ENCODE measurements at regions of chr22 and their contacts with region 1.

Region 1: DNA sequence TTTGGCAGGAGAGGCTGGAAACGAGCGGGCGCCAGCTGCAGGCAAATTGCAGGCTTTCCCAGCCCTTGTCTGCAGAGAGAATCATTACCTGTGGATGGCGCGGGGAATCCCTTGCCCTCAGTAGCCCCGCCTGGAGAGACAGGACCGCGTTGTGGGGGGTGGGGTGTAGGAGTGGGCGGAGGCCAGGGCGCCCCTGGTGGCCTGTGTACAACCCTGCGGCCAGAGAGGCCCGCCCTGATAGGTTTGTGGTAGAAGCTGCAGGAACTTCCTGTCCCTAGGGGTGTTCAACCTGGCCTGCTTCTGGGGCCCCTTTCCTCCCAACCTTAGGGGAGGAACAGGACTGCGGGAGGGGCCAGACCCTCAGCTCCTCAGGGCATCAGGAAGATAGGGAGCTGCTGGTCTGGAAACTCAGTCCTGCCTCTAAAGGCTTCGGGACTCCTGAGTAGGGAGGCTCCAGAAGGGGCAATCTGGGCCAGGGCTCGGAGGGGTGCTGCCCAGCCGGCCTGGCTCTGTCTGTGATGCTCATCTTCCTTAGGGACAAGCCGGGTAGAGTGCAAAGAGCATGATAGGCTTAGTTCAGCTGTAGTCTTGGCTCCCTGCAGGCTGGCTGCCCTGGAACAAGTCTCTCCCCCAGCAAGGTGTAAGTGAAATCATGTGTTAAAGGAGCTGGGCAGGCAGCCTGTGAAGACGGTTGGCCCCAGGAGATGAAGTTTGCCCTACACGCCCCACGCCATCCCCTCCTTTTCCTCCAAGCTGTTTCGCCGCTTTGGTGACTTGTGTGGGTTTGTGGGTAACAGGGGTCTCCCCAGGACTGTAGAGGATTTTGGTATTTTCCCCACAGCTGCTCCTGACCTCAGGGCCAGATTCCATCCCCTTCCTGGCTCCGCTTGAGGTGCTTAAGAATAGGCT is 24.1 kb upstream of the SUSD2 start:
- DNase-seq: peak; percentile 96
- ATAC-seq: peak; percentile 76
- H3K4me3 Mint-ChIP-seq: peak overlapping the region; percentile 93
- H3K27ac Mint-ChIP-seq: peak overlapping the region; percentile 94
- H3K4me1 Mint-ChIP-seq: peaks cover 54% of the 10 kb centered on the region
- H3K27me3 Mint-ChIP-seq: no peaks in the 10 kb centered on the region

Region 2: GRCh38 chr22:23893943-23894709 is 263.0 kb before region 1 on chr22 and contains the start of gene MIF:
- CTCF ChIA-PET with region 1: interaction called, 12 read pairs
- DNase-seq: peak; percentile 98
- ATAC-seq: peak; percentile 88
- H3K4me3 Mint-ChIP-seq: peak within 1 kb of the TSS; percentile 89
- H3K27ac Mint-ChIP-seq: peak within 1 kb of the TSS; percentile 96
- H3K4me1 Mint-ChIP-seq: peaks cover 34% of the 10 kb centered on the region
- H3K27me3 Mint-ChIP-seq: no peaks in the 10 kb centered on the region
- total RNA-seq, gene MIF: 730 to 765 TPM

Region 3: GRCh38 chr22:24060375-24060788 is 96.8 kb before region 1 on chr22:
- CTCF ChIA-PET with region 1: interaction called, 17 read pairs
- DNase-seq: no peak
- ATAC-seq: no peak
- H3K4me3 Mint-ChIP-seq: no peak overlapping the region
- H3K27ac Mint-ChIP-seq: peak overlapping the region; percentile 33
- H3K4me1 Mint-ChIP-seq: peaks cover 22% of the 10 kb centered on the region
- H3K27me3 Mint-ChIP-seq: no peaks in the 10 kb centered on the region

Region 4: DNA sequence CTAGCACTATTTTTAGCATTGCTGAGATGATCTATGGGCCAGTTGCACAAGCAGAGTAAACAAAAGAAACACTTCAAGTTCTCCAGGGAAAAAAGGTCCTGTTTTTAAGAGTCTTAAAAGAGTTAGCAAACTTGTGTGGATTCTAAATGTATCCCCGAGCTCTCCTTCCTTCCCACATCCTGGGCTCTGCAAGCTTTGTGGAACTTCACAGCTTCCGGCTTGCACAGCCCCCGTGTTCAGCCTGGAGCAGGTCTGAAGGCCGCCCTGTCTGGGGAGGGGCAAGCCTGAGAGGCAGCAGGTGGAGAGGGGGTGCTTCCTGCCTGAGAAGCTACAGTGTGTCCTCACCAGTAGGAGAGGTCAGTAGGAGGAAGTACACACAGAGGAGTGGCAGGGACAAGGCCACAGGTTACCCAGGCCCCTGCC is 11.0 kb before region 1 on chr22:
- CTCF ChIA-PET with region 1: interaction called, 63 read pairs
- DNase-seq: peak; percentile 64
- ATAC-seq: peak; percentile 69
- H3K4me3 Mint-ChIP-seq: no peak overlapping the region
- H3K27ac Mint-ChIP-seq: peak overlapping the region; percentile 72
- H3K4me1 Mint-ChIP-seq: peaks cover 40% of the 10 kb centered on the region
- H3K27me3 Mint-ChIP-seq: no peaks in the 10 kb centered on the region

Region 5: GRCh38 chr22:24214467-24215285 is 57.5 kb after region 1 on chr22:
- CTCF ChIA-PET with region 1: no interaction called
- DNase-seq: no peak
- ATAC-seq: no peak
- H3K4me3 Mint-ChIP-seq: no peak overlapping the region
- H3K27ac Mint-ChIP-seq: no peak overlapping the region
- H3K4me1 Mint-ChIP-seq: peaks cover 14% of the 10 kb centered on the region
- H3K27me3 Mint-ChIP-seq: peaks cover 3% of the 10 kb centered on the region

Region 6: GRCh38 chr22:24230911-24231656 is 73.9 kb after region 1 on chr22:
- CTCF ChIA-PET with region 1: interaction called, 10 read pairs
- DNase-seq: peak; percentile 74
- ATAC-seq: peak; percentile 84
- H3K4me3 Mint-ChIP-seq: no peak overlapping the region
- H3K27ac Mint-ChIP-seq: no peak overlapping the region
- H3K4me1 Mint-ChIP-seq: peaks cover 3% of the 10 kb centered on the region
- H3K27me3 Mint-ChIP-seq: no peaks in the 10 kb centered on the region